HEK293 (cell line): ENCODE measurements at regions of chr6 and their contacts with region 1.

Region 1: DNA sequence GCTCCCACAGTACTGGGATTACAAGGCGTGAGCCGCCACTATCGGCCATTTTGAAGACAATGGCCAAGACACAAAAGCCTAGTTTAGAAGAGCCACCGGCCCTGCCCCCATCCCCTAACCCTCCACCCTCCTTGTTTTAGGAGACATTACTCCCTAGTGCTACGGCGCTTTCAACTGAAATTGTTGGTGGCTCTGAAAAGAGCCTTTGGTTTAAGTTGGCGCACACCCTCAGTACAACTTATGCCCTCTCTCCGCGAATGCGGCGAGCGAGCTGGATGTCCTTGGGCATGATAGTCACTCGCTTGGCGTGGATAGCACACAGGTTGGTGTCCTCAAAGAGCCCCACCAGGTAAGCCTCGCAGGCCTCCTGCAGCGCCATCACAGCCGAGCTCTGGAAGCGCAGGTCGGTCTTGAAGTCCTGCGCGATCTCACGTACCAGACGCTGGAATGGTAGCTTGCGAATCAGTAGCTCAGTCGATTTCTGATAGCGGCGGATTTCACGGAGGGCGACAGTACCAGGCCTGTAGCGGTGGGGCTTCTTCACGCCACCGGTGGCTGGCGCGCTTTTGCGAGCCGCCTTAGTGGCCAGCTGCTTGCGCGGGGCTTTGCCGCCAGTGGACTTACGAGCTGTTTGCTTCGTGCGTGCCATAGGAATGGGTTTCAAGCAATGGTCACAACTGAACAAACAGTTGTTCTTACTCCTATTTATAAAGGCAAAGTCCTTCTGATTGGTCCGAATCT is 114.9 kb upstream of the BTN3A2 start:
- H3K4me3 ChIP-seq: peak overlapping the region; percentile 33
- H3K27ac ChIP-seq: peak overlapping the region; percentile 80
- H3K4me1 ChIP-seq: no peaks in the 10 kb centered on the region
- CTCF ChIP-seq: no peak

Region 2: DNA sequence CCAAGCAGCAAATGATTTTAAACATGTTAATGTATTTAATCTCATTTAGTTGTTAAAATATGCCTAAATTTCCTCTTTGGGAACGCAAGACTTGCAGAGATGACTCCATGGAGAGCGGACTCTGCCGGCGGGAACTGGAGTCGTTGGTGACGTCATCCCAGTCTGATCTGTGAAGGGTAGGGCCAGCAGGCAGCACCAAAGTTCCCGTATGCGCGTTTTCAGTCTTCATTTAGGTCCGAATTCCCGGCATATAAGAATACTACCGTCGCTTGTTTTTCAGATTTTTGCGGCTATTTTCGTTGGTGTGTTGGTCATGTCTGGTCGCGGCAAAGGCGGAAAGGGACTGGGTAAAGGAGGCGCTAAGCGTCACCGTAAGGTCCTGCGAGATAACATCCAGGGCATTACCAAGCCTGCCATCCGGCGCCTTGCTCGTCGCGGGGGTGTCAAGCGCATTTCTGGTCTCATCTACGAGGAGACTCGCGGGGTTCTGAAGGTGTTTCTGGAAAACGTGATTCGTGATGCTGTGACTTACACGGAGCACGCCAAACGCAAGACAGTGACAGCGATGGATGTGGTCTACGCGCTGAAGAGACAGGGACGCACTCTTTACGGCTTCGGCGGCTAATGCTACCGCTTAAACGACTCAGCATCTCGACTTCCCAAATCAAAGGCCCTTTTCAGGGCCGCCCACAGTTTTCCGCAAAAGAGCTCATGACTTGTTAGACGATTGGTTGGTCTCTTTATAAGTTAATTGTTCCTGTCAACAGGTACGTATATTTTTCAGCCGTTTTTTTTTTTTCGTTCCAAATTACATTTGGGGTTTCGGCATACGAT is 45.6 kb before region 1 on chr6:
- CTCF ChIA-PET with region 1: interaction called, 3 read pairs
- POLR2A ChIA-PET with region 1: interaction called, 16 read pairs
- H3K4me3 ChIP-seq: peak overlapping the region; percentile 73
- H3K27ac ChIP-seq: peak overlapping the region; percentile 71
- H3K4me1 ChIP-seq: no peaks in the 10 kb centered on the region
- CTCF ChIP-seq: peak; percentile 81

Region 3: DNA sequence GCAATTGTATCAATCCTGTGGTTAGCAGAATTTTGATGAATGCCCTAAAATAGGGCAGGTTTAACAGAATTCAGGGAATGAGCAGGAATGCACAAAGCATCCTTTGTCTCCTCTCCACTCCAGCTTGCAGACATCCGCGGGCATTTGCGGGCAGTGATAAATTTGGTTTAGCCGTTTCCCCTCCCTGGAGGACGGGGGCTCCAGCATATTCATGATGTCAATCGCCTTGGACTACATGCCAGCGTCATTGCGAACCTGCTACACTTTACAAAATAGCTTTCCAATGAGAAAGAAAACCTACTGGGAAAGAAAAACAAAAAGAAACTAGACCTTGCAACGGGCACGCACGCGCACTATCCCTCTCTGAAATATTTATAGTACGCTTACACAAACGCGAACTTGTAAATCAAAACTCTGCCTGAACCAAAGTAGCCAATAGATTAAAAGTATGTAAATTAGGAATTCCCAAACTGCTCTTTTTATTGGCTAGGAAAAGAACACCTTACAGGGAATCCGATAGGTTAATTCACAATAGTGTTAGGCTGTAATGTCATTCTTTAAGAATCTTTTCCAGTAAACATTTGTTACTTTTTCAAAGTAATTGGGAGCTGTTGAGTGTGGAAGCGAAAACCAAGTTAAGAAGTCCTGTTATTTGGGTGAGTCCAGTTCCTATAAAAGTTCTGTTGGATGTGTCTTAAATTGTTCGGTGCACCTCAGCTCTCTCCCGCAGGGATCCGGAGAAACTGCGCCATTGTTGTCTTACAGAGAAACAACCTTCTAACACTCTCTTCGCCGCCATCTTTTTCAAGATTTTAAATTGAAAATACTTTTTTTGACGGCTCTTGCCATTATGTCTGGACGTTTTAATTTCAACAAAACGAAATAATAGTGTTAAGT is 26.2 kb before region 1 on chr6:
- CTCF ChIA-PET with region 1: interaction called, 3 read pairs
- POLR2A ChIA-PET with region 1: interaction called, 35 read pairs
- H3K4me3 ChIP-seq: peak overlapping the region; percentile 68
- H3K27ac ChIP-seq: peak overlapping the region; percentile 61
- H3K4me1 ChIP-seq: no peaks in the 10 kb centered on the region
- CTCF ChIP-seq: no peak